BJ (cell line): ENCODE measurements at regions of chr17 and their contacts with region 1.

Region 1: DNA sequence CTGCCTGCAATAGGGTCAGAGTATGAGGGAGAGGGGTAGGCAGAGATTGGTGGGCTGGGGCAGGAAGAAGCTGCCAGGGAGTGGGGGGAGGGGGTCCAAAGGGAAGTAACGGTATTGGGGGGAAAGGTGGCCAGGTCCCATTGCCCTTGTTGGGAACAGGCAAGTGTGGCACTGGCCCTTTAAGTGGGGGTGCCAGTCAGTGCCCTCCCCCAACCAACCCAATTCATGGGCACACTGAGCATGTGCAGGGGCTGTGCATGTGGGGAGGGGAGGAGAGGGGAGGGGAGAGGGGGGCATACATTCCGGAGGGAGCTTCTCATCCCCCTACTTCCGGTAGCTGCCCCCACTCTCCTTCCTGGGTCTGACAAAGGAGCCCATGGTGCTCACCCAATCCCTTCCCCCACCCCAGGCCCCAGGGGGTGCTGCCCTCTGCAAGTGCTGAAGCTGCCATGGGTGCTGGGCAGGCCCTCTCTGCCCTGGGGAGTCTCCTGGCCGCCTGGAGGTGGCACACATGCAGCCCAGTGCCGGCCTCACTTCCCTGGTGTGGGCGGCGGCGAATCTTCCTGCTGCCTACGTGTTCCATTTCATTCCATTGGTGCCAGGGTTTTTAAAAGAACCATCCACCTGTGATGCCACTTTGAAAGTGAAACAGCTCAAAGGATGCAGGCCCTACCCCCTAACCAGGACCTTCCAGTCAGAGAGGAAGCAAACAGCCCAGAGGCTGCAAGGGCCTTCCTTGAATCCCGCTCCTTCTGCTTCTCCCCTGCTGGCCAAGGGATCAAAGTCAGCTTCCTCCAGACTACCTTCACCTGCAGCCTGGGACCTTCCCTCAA is 11.0 kb downstream of the HEXIM2 start:
- DNase-seq: peak; percentile 26
- H3K4me3 ChIP-seq: peak overlapping the region; percentile 24
- H3K27me3 ChIP-seq: no peaks in the 10 kb centered on the region
- CTCF ChIP-seq: peak; percentile 11; the same call in 1 of the 2 replicates

Region 2: DNA sequence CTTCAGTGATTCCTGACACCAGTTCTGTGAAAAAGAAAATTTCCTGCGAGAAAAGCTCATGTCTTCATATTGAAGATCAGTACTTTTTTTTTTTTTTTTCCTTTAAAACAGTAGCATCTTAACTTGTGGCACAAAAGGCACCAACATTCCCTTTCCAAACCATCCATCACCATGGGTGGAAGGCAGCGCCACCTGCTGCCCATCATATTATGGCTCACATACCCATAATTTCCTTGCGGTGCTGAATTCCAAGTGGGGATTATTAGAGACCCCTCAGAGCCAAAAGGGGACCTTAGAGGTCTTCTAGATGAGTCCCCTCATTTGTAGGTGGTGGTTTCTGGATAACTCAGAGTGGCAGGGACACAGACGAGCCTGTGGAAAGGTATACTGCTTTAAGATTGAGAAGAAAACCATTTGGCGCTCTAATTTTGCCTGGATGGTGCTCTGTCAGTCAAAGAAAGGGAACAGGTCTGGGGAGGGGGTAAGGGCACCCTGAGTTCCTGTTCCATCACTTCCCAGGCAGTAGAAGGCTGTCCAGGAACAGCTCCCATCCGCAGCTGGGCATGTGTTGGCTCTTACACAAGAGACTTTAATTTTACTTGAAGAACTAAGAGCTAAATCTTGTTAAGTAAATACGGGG is 1406.1 kb before region 1 on chr17:
- CTCF ChIA-PET with region 1: no interaction called
- POLR2A ChIA-PET with region 1: no interaction called
- DNase-seq: no peak
- H3K4me3 ChIP-seq: no peak overlapping the region
- H3K27me3 ChIP-seq: no peaks in the 10 kb centered on the region
- CTCF ChIP-seq: peak; percentile 86

Region 3: GRCh38 chr17:45077643-45078042 is 95.0 kb before region 1 on chr17:
- CTCF ChIA-PET with region 1: no interaction called
- POLR2A ChIA-PET with region 1: no interaction called
- DNase-seq: no peak
- H3K4me3 ChIP-seq: no peak overlapping the region
- H3K27me3 ChIP-seq: no peaks in the 10 kb centered on the region
- CTCF ChIP-seq: no peak

Region 4: GRCh38 chr17:45155029-45155428 is 17.6 kb before region 1 on chr17:
- CTCF ChIA-PET with region 1: interaction called, 62 read pairs
- POLR2A ChIA-PET with region 1: interaction called, 16 read pairs
- DNase-seq: no peak
- H3K4me3 ChIP-seq: no peak overlapping the region
- H3K27me3 ChIP-seq: no peaks in the 10 kb centered on the region
- CTCF ChIP-seq: no peak